ENCODE measurements at regions of chr14 and their contacts with region 1.

Region 1: DNA sequence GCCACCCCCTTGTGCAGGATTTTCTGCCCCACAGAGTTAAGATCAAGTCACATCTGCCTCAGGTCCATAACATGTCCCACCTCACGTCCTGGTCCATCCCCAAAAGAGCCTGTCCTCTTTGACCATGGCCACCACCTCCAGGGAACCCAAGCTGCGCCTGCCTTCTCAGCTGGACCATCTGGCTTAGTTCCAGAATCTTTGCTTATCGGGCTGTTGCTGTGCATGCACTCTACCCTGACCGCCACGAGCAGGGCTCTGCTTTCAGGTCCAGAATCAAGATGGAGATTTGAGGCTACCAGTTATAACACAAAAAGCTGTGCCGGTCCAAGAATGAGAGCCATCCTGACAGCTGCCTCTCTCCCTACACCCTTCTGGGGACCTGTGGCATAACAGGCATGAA is 326.7 kb downstream of the DPF3 start:
- DNase-seq: no peak
- H3K4me3 Mint-ChIP-seq: no peak overlapping the region
- H3K27ac Mint-ChIP-seq: peak overlapping the region; percentile 38
- H3K4me1 Mint-ChIP-seq: peaks cover 4% of the 10 kb centered on the region
- H3K27me3 Mint-ChIP-seq: peaks cover 20% of the 10 kb centered on the region

Region 2: GRCh38 chr14:72535485-72535884 is 31.7 kb before region 1 on chr14:
- CTCF ChIA-PET with region 1: no interaction called
- POLR2A ChIA-PET with region 1: no interaction called
- DNase-seq: peak; percentile 35
- H3K4me3 Mint-ChIP-seq: peak overlapping the region; percentile 7
- H3K27ac Mint-ChIP-seq: peak overlapping the region; percentile 43
- H3K4me1 Mint-ChIP-seq: peaks cover 84% of the 10 kb centered on the region
- H3K27me3 Mint-ChIP-seq: no peaks in the 10 kb centered on the region

Region 3: GRCh38 chr14:72577521-72577920 is 10.3 kb after region 1 on chr14:
- CTCF ChIA-PET with region 1: interaction called, 11 read pairs
- POLR2A ChIA-PET with region 1: no interaction called
- DNase-seq: no peak
- H3K4me3 Mint-ChIP-seq: no peak overlapping the region
- H3K27ac Mint-ChIP-seq: no peak overlapping the region
- H3K4me1 Mint-ChIP-seq: no peaks in the 10 kb centered on the region
- H3K27me3 Mint-ChIP-seq: peaks cover 55% of the 10 kb centered on the region

Region 4: GRCh38 chr14:72651081-72651480 is 83.9 kb after region 1 on chr14:
- CTCF ChIA-PET with region 1: no interaction called
- POLR2A ChIA-PET with region 1: no interaction called
- DNase-seq: no peak
- H3K4me3 Mint-ChIP-seq: no peak overlapping the region
- H3K27ac Mint-ChIP-seq: no peak overlapping the region
- H3K4me1 Mint-ChIP-seq: no peaks in the 10 kb centered on the region
- H3K27me3 Mint-ChIP-seq: peaks cover 11% of the 10 kb centered on the region

Region 5: GRCh38 chr14:72822946-72823611 is 255.9 kb after region 1 on chr14:
- CTCF ChIA-PET with region 1: no interaction called
- POLR2A ChIA-PET with region 1: no interaction called
- DNase-seq: no peak
- H3K4me3 Mint-ChIP-seq: no peak overlapping the region
- H3K27ac Mint-ChIP-seq: no peak overlapping the region
- H3K4me1 Mint-ChIP-seq: peaks cover 2% of the 10 kb centered on the region
- H3K27me3 Mint-ChIP-seq: peaks cover 12% of the 10 kb centered on the region

Measured in activated CD4-positive, alpha-beta T cell treated with anti-CD3 and anti-CD28 coated beads, Interleukin-2, amount 10 ng/mL, durations not matched to agents 7 days and 5 days (primary cell).